ENCODE measurements at regions of chr17 and their contacts with region 1.

Region 1: DNA sequence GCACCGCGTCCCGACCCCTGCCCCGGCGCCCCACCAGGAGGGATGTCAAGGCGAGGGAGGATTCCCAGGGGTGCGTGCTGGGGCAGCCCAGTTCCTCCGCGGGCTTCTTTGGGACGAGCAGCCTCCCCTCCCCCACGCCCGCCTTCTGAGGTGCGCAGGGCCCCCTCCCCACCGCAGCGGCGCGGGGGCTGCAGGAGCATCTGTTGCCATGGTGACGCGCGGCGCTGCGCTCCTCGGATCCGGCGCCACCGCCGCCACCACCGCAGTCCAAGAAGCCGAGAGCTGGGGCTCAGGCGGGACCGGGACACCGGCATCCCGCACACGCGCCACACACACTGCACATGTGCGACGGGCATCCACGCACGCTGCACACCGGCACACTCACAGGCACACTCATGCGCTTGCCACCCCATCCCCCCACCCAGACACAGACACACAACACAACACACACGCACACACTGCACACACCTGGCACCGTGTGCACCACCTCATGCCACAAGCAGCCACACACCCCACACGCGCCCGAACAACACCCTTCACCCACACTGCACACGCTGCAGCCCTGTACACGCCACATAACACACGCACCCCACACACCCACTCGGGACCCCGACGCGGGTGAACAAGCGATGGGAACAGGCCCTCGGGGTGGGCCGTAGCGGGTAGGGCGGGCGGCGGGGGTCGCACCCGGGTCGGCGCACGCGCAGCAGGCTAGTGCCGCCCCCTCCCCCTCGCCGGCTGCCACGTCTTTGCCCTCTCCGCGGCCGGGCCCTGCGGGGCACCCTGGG is 17.0 kb downstream of the ENPP7 start:
- DNase-seq: no peak
- H3K4me3 Mint-ChIP-seq: no peak overlapping the region
- H3K27ac Mint-ChIP-seq: peak overlapping the region; percentile 52
- H3K4me1 Mint-ChIP-seq: peaks cover 11% of the 10 kb centered on the region
- H3K27me3 Mint-ChIP-seq: peaks cover 41% of the 10 kb centered on the region

Region 2: DNA sequence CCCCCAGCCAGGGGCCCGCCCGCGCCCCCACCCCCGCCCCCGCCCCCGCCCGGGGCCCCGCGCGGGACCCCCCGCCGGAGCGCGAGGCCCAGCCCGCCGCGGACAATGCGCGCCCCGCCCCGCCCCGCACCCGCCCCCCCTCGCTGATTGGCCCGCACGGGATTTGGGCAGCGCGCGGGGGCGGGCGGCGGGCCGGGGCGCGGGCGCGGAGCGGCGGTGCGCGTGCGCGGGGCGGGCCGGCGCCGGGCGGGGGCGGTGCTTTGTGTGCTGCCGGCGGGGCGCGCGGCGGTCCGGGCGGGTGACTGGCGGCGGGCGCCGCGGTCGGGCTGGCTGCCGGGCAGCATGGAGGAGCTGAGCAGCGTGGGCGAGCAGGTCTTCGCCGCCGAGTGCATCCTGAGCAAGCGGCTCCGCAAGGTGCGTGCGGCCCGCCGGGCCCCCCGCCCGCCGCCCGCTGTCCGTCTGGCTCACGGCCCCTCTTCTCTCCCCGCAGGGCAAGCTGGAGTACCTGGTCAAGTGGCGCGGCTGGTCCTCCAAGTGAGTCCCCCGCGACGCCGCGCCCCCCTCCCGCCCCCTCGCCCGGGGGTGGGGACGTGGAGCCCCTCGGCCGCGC is 30.3 kb after region 1 on chr17 and contains the start of gene CBX2:
- intact Hi-C with region 1: loop called (anchors 2 kb)
- DNase-seq: peak; percentile 78
- H3K4me3 Mint-ChIP-seq: peak within 1 kb of the TSS; percentile 84
- H3K27ac Mint-ChIP-seq: peak within 1 kb of the TSS; percentile 87
- H3K4me1 Mint-ChIP-seq: peaks cover 12% of the 10 kb centered on the region
- H3K27me3 Mint-ChIP-seq: peaks cover 59% of the 10 kb centered on the region
- total RNA-seq, gene CBX2: 4.7 and 5.1 TPM in 2 replicates

Region 3: GRCh38 chr17:79997011-79997660 is 249.4 kb after region 1 on chr17:
- intact Hi-C with region 1: loop called (anchors 2 kb)
- DNase-seq: peak; percentile 73
- H3K4me3 Mint-ChIP-seq: peak overlapping the region; percentile 60
- H3K27ac Mint-ChIP-seq: peak overlapping the region; percentile 96
- H3K4me1 Mint-ChIP-seq: peaks cover 47% of the 10 kb centered on the region
- H3K27me3 Mint-ChIP-seq: no peaks in the 10 kb centered on the region